Activated T-helper 2 cell treated with anti-CD3 and anti-CD28 coated beads, Interferon-gamma antibody, Interleukin-2, Interleukin-4, amounts not matched to agents 10 μg/mL and 5 μg/mL and 100 μg/mL, durations not matched to agents 14 hours and 24 hours and 36 hours (primary cell): ENCODE measurements at regions of chr1 and their contacts with region 1.

Region 1: GRCh38 chr1:66331657-66332547 is 202.1 kb upstream of the SGIP1 start:
- DNase-seq: no peak
- H3K4me3 Mint-ChIP-seq: peak overlapping the region; percentile 97
- H3K27ac Mint-ChIP-seq: peak overlapping the region; percentile 90
- H3K4me1 Mint-ChIP-seq: peaks cover 62% of the 10 kb centered on the region
- H3K27me3 Mint-ChIP-seq: no peaks in the 10 kb centered on the region

Region 2: DNA sequence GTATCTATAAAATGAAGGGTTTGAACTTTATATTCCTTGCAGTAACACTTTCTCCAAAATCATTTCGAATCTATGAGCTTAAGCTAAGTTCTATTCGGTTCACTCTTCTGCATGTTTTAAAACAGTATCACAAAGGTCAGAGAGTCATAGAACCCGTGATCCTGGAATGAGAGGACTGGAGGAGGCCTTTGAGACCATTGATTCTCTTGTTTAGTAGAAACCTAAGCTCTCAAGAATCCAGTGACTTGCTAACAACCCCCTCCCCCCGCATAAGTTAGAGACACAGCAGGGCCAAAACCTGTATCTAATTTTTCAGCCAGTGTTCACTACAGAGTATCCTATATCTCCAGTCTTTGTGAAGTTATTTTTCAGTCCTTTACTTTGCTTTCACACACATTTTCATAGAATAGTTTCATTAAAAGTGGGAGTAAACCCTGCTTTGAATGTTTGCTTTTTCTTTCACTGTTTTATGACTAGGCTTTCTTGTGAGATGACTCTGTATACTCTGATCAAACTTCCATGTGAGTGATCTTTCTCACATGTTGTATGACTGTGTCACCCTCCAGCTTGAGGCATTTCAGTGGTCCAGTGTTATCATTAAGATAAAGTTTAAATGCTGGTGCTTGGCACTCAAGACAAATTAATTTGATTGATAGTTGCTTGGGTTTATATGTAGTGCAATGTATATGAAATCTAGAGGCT is 73.3 kb before region 1 on chr1:
- intact Hi-C with region 1: loop called (anchors 1 kb)
- DNase-seq: no peak
- H3K4me3 Mint-ChIP-seq: no peak overlapping the region
- H3K27ac Mint-ChIP-seq: no peak overlapping the region
- H3K4me1 Mint-ChIP-seq: peaks cover 52% of the 10 kb centered on the region
- H3K27me3 Mint-ChIP-seq: peaks cover 7% of the 10 kb centered on the region

Region 3: GRCh38 chr1:66271216-66271903 is 60.5 kb before region 1 on chr1:
- intact Hi-C with region 1: loop called (anchors 1 kb)
- DNase-seq: no peak
- H3K4me3 Mint-ChIP-seq: no peak overlapping the region
- H3K27ac Mint-ChIP-seq: peak overlapping the region; percentile 44
- H3K4me1 Mint-ChIP-seq: peaks cover 62% of the 10 kb centered on the region
- H3K27me3 Mint-ChIP-seq: peaks cover 21% of the 10 kb centered on the region

Region 4: DNA sequence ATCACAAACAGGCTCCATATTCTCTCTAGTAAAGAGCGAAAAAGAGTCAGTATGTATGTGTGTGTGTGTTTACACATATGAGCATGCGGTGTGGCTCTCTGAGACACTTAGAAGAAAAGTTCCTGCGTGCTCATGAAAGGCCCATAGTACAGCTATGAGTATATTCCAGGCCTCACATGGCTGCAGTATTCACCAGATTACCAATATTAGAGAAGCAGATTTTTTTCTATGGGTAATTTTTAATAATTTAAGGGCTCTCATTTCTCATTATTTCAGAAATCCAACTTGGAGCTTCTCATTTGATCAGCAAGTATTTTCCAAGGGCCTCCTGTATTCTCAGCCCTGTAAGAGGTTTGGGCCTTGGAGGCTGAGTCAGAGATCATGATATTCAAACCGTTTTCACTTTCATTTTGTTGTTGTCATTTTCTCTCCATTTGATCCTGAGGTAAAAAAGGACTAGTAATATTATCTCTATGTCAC is 30.9 kb before region 1 on chr1:
- intact Hi-C with region 1: loop called (anchors 1 kb)
- DNase-seq: peak; percentile 21
- H3K4me3 Mint-ChIP-seq: peak overlapping the region; percentile 68
- H3K27ac Mint-ChIP-seq: peak overlapping the region; percentile 82
- H3K4me1 Mint-ChIP-seq: peaks cover 40% of the 10 kb centered on the region
- H3K27me3 Mint-ChIP-seq: no peaks in the 10 kb centered on the region

Region 5: DNA sequence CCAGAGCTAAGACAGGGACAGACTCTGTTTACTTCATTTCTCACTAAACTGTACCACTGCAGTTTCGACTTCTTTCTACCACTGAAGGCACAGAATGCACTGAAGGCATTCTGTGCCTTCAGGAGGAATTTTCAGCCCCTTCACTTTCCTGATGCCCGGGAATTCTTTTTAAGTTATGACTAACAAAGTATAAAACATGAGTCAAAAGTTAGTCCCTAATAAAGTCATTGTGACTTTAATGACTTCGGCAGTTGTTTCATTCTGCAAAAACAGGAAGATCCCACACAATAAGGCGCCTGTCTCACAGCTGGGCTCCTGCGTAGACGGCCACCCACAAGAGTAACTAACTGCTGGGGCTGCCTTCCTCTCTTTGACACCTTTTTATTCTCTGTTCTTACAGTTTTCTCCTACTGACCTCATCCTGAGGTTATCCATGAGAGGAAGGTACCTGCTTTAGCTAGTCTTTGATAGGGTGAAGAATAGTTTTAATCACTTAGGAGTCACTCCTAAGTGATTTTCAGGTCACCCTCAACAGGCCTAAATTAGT is 18.2 kb after region 1 on chr1:
- intact Hi-C with region 1: loop called (anchors 1 kb)
- DNase-seq: no peak
- H3K4me3 Mint-ChIP-seq: peak overlapping the region; percentile 47
- H3K27ac Mint-ChIP-seq: peak overlapping the region; percentile 72
- H3K4me1 Mint-ChIP-seq: peaks cover 68% of the 10 kb centered on the region
- H3K27me3 Mint-ChIP-seq: no peaks in the 10 kb centered on the region